ENCODE measurements at regions of chr17 and their contacts with region 1.

Region 1: GRCh38 chr17:29931231-29931932 is 1.4 kb upstream of the SSH2 start:
- DNase-seq: peak; percentile 84
- ATAC-seq: peak; percentile 80
- H3K4me3 Mint-ChIP-seq: no peak overlapping the region
- H3K27ac Mint-ChIP-seq: no peak overlapping the region
- H3K4me1 Mint-ChIP-seq: peaks cover 16% of the 10 kb centered on the region
- H3K27me3 Mint-ChIP-seq: no peaks in the 10 kb centered on the region

Region 2: DNA sequence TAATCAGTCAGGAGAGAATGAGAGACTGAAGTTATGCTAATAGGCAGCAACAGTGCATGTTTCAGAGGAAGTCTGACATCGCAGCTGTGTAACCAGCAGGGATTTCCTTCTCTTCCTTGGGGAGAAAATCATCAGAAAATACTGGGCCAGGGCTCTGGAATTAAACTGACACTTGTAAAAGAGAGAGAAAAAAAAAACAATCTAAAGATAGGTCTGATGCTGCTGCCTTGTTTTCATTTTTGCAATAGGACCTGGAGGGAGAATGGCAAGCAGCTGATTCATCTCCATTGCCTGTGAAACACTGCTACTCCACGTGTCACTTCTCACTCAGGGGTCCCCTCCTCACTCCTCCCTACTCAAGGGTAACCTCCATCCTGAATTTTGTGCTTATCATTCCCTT is 291.0 kb before region 1 on chr17:
- CTCF ChIA-PET with region 1: interaction called, 51 read pairs
- POLR2A ChIA-PET with region 1: interaction called, 6 read pairs
- DNase-seq: no peak
- ATAC-seq: no peak
- H3K4me3 Mint-ChIP-seq: no peak overlapping the region
- H3K27ac Mint-ChIP-seq: peak overlapping the region; percentile 12
- H3K4me1 Mint-ChIP-seq: peaks cover 19% of the 10 kb centered on the region
- H3K27me3 Mint-ChIP-seq: no peaks in the 10 kb centered on the region

Region 3: DNA sequence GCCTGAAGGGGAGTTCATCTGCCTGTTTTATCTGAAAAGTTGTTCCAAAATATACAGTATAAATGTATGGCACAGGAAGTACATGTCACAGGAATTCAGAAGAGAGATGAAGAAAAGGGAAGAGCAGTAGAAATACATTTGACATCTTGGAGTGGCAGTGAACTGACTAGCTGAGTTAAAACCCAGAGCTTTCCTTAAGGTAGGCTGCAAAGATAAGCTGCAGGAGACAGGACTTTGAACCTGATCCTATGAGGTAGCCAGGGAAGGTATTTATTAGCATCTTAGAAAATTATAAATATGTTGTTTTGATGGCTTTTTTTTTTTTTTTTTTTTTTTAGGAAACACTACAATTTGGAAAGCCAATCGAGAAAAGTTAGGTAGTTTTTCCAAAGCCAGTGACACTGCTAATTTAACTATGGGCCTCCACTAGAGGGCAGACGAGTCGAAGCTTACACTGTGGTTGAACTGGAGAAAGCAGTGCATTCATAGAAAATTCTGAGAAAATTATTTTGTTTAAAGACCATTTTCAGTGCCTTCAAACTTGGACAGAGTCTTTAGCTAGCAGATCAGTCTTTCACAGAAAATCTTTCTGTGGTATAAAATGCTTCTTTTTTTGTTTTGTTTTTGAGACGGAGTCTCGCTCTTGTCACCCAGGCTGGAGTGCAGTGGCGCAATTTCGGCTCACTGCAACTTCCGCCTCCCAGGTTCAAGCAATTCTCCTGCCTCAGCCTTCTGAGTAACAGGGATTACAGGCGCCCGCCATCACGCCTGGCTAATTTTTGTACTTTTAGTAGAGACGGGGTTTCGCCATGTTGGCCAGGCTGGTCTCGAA is 123.6 kb before region 1 on chr17:
- CTCF ChIA-PET with region 1: interaction called, 297 read pairs
- POLR2A ChIA-PET with region 1: interaction called, 7 read pairs
- DNase-seq: peak; percentile 82
- ATAC-seq: peak; percentile 74
- H3K4me3 Mint-ChIP-seq: no peak overlapping the region
- H3K27ac Mint-ChIP-seq: no peak overlapping the region
- H3K4me1 Mint-ChIP-seq: peaks cover 21% of the 10 kb centered on the region
- H3K27me3 Mint-ChIP-seq: no peaks in the 10 kb centered on the region

Region 4: DNA sequence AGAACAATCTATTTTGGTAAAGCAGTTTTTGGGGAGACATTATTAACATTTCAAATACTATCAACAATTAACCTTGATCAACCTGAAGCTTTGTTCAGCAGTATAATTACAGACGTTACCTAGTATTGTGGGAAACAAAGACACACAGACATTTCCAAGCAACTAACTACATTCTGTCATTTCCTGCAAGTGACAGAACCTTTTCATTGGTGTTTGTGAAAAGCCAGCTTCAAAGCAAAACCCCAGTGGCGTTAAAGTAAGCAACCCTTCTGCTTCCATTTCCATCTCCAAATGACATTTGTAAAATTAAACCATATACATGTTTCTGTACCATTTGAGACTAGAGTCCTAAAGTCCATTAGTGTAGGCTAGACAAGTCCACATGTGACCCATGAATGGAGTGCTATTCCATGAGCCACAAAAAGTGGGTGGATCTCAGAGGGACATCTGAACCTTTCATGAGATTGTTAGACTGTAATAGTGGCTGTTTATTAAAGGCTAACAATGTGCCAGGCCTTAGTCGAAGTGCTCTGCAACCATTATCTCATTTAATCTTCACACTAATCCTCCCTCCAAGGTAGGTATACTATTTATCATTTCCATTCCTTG is 102.6 kb before region 1 on chr17:
- CTCF ChIA-PET with region 1: interaction called, 28 read pairs
- POLR2A ChIA-PET with region 1: interaction called, 7 read pairs
- DNase-seq: no peak
- ATAC-seq: no peak
- H3K4me3 Mint-ChIP-seq: no peak overlapping the region
- H3K27ac Mint-ChIP-seq: no peak overlapping the region
- H3K4me1 Mint-ChIP-seq: peaks cover 20% of the 10 kb centered on the region
- H3K27me3 Mint-ChIP-seq: no peaks in the 10 kb centered on the region

Region 5: GRCh38 chr17:29867643-29868181 is 63.7 kb before region 1 on chr17:
- CTCF ChIA-PET with region 1: interaction called, 39 read pairs
- POLR2A ChIA-PET with region 1: interaction called, 3 read pairs
- DNase-seq: no peak
- ATAC-seq: no peak
- H3K4me3 Mint-ChIP-seq: no peak overlapping the region
- H3K27ac Mint-ChIP-seq: no peak overlapping the region
- H3K4me1 Mint-ChIP-seq: peaks cover 8% of the 10 kb centered on the region
- H3K27me3 Mint-ChIP-seq: no peaks in the 10 kb centered on the region

Region 6: DNA sequence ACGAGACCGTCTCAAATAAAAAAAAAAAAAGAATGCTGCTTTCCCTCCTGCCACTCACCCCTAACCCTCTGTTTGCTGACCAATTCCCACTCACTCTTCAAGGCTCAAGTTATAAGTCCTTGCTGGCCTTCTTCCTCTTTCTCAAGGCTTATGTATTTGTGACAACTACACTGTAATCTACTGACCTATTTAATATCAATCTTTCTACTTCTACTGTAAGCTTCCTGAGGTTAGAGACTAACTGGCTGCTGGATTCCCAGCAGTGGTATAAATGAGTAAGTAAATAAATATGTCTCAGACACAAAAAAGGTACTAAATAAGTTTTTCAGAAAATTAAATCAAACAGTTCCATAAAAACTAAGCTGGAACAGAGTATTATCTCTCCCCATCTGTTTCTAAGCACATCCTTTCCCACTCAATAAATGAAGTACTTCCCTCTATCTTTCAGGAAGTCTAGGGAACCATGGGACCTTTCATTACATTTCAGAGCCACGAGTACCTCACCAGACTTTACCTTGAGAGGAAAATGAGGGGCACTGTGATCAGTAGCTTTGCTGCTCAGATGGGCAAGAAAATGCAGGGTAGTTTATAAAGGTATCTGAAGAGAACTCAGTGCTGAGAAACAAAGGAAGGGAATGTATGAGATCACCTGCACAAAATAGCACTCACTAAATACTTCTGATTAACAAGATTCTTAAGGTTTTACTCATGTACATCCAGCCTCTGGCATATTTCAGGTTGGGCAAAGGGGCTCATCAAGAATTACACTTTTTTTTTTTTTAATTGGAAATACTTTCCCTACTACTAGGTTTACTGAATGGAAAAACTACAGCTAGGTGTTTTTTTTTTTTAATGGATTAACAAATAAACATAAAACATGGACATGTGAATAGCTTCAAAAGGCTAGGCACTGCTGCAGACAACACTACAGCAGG is 12.2 kb before region 1 on chr17:
- CTCF ChIA-PET with region 1: interaction called, 23 read pairs
- POLR2A ChIA-PET with region 1: interaction called, 3 read pairs
- DNase-seq: no peak
- ATAC-seq: no peak
- H3K4me3 Mint-ChIP-seq: no peak overlapping the region
- H3K27ac Mint-ChIP-seq: no peak overlapping the region
- H3K4me1 Mint-ChIP-seq: peaks cover 3% of the 10 kb centered on the region
- H3K27me3 Mint-ChIP-seq: no peaks in the 10 kb centered on the region

Region 7: GRCh38 chr17:30021708-30022317 is 90.4 kb after region 1 on chr17:
- CTCF ChIA-PET with region 1: interaction called, 19 read pairs
- POLR2A ChIA-PET with region 1: no interaction called
- DNase-seq: peak; percentile 62
- ATAC-seq: peak; percentile 61
- H3K4me3 Mint-ChIP-seq: no peak overlapping the region
- H3K27ac Mint-ChIP-seq: no peak overlapping the region
- H3K4me1 Mint-ChIP-seq: no peaks in the 10 kb centered on the region
- H3K27me3 Mint-ChIP-seq: peaks cover 12% of the 10 kb centered on the region

Measured in activated CD8-positive, alpha-beta T cell treated with anti-CD3 and anti-CD28 coated beads, Interleukin-2, amount 10 ng/mL, durations not matched to agents 7 days and 5 days (primary cell).